HepG2 (cell line): ENCODE measurements at regions of chr4 and their contacts with region 1.

Region 1: GRCh38 chr4:73729534-73730165 is 10.7 kb upstream of the CXCL8 start:
- DNase-seq: peak; percentile 47
- ATAC-seq: peak; percentile 95
- H3K4me3 ChIP-seq: no peak overlapping the region
- H3K27ac ChIP-seq: no peak overlapping the region
- H3K4me1 ChIP-seq: no peaks in the 10 kb centered on the region
- H3K27me3 ChIP-seq: peaks cover 0 to 3% of the 10 kb centered on the region in 2 experiments; a peak in 2 of 5 replicates
- CTCF ChIP-seq: peak; percentile 78
- EP300 ChIP-seq: no peak
- POLR2A ChIP-seq: no peak
- RAD21 ChIP-seq: no peak

Region 2: GRCh38 chr4:73387552-73387951 is 342.1 kb before region 1 on chr4:
- CTCF ChIA-PET with region 1: no interaction called
- POLR2A ChIA-PET with region 1: no interaction called
- in situ Hi-C with region 1: no loop called
- intact Hi-C with region 1: no loop called
- DNase-seq: no peak
- ATAC-seq: no peak
- H3K4me3 ChIP-seq: no peak overlapping the region
- H3K27ac ChIP-seq: peak overlapping the region; percentile 68
- H3K4me1 ChIP-seq: peaks cover 89% of the 10 kb centered on the region
- H3K27me3 ChIP-seq: no peaks in the 10 kb centered on the region
- CTCF ChIP-seq: no peak
- EP300 ChIP-seq: no peak
- POLR2A ChIP-seq: no peak
- RAD21 ChIP-seq: no peak

Region 3: DNA sequence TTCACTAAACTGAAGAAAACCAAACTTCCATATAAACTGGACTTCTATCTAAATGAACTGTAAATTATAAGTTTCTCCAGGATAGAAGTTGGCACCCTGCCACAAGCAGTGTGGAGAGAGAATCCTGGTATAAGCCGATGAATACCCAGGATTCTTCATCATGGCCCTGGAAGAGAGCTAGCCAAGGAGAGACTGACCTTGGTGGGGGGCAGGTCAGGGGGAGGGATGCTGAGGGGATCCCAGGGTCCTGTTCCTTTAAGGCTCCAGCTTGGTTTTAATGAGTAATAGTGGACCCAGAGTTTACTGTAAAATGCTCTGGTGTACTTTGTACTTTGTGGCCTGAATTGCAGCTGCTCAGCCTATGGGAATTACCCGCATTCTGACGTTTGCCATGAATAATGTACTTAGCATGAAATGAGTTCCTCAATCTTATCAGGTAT is 126.4 kb before region 1 on chr4:
- CTCF ChIA-PET with region 1: no interaction called
- POLR2A ChIA-PET with region 1: no interaction called
- in situ Hi-C with region 1: no loop called
- intact Hi-C with region 1: no loop called
- DNase-seq: peak; percentile 88
- ATAC-seq: peak; percentile 64
- H3K4me3 ChIP-seq: no peak overlapping the region
- H3K27ac ChIP-seq: peak overlapping the region; percentile 56
- H3K4me1 ChIP-seq: peaks cover 94% of the 10 kb centered on the region
- H3K27me3 ChIP-seq: no peaks in the 10 kb centered on the region
- CTCF ChIP-seq: no peak
- EP300 ChIP-seq: peak in 1 of 2 experiments; percentile 56; a peak in 2 of 4 replicates
- POLR2A ChIP-seq: no peak
- RAD21 ChIP-seq: no peak

Region 4: DNA sequence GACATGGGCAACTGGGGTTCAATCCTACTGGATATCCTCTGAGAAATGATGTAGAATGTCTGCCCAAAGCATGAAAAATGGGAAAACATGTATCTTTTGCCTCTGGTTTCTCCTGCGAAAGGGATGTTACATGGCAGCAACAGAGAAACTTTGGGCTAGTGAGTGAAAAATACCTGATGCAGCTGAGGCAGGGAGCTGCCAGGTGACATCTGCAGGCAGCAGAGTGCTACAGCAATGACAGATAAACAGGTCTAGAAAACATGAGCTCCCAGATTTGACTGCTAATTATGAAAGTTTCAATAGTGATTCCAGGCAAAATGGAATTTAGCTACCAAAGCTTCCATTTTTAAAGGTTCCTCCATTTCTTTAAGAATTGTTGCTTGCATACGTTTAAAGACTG is 134.7 kb after region 1 on chr4:
- CTCF ChIA-PET with region 1: interaction called, 3 read pairs
- POLR2A ChIA-PET with region 1: no interaction called
- in situ Hi-C with region 1: no loop called
- intact Hi-C with region 1: loop called (anchors 2 kb)
- DNase-seq: peak; percentile 11
- ATAC-seq: peak; percentile 81
- H3K4me3 ChIP-seq: no peak overlapping the region
- H3K27ac ChIP-seq: no peak overlapping the region
- H3K4me1 ChIP-seq: peaks cover 8% of the 10 kb centered on the region; the same call in 1 of the 2 replicates
- H3K27me3 ChIP-seq: peaks cover 0 to 9% of the 10 kb centered on the region in 2 experiments; a peak in 2 of 5 replicates
- CTCF ChIP-seq: peak; percentile 43
- EP300 ChIP-seq: no peak
- POLR2A ChIP-seq: no peak
- RAD21 ChIP-seq: no peak

Region 5: GRCh38 chr4:73922766-73923630 is 193.3 kb after region 1 on chr4:
- CTCF ChIA-PET with region 1: no interaction called
- POLR2A ChIA-PET with region 1: no interaction called
- in situ Hi-C with region 1: no loop called
- intact Hi-C with region 1: loop called (anchors 1 kb)
- DNase-seq: no peak
- ATAC-seq: no peak
- H3K4me3 ChIP-seq: no peak overlapping the region
- H3K27ac ChIP-seq: no peak overlapping the region
- H3K4me1 ChIP-seq: no peaks in the 10 kb centered on the region
- H3K27me3 ChIP-seq: no peaks in the 10 kb centered on the region
- CTCF ChIP-seq: no peak
- EP300 ChIP-seq: no peak
- POLR2A ChIP-seq: no peak
- RAD21 ChIP-seq: no peak

Region 6: GRCh38 chr4:74038161-74039064 is 308.8 kb after region 1 on chr4 and contains the start of gene CXCL3:
- CTCF ChIA-PET with region 1: no interaction called
- POLR2A ChIA-PET with region 1: no interaction called
- in situ Hi-C with region 1: no loop called
- intact Hi-C with region 1: loop called (anchors 5 kb)
- DNase-seq: no peak
- ATAC-seq: peak; percentile 90
- H3K4me3 ChIP-seq: peak within 1 kb of the TSS; percentile 10 to 62 (median 43); a peak in 4 of 6 replicates
- H3K27ac ChIP-seq: no peak within 1 kb of the TSS
- H3K4me1 ChIP-seq: peaks cover 15% of the 10 kb centered on the region
- H3K27me3 ChIP-seq: peaks cover 4 to 26% of the 10 kb centered on the region in 2 experiments
- CTCF ChIP-seq: peak; percentile 48
- EP300 ChIP-seq: no peak
- POLR2A ChIP-seq: no peak
- RAD21 ChIP-seq: no peak
- total RNA-seq, gene CXCL3: 0.13 TPM in 1 of 2 replicates, not detected in the other

Region 7: GRCh38 chr4:74830925-74831324 is 1101.3 kb after region 1 on chr4:
- CTCF ChIA-PET with region 1: no interaction called
- POLR2A ChIA-PET with region 1: no interaction called
- in situ Hi-C with region 1: no loop called
- intact Hi-C with region 1: no loop called
- DNase-seq: no peak
- ATAC-seq: no peak
- H3K4me3 ChIP-seq: no peak overlapping the region
- H3K27ac ChIP-seq: no peak overlapping the region
- H3K4me1 ChIP-seq: no peaks in the 10 kb centered on the region
- H3K27me3 ChIP-seq: no peaks in the 10 kb centered on the region
- CTCF ChIP-seq: no peak
- EP300 ChIP-seq: no peak
- POLR2A ChIP-seq: no peak
- RAD21 ChIP-seq: no peak